ENCODE measurements at regions of chr16 and their contacts with region 1.

Region 1: GRCh38 chr16:58684354-58685083 is at the start of gene SLC38A7:
- DNase-seq: peak; percentile 85
- ATAC-seq: peak; percentile 97
- H3K4me3 Mint-ChIP-seq: peak within 1 kb of the TSS; percentile 84
- H3K27ac Mint-ChIP-seq: peak within 1 kb of the TSS; percentile 45
- H3K4me1 Mint-ChIP-seq: peaks cover 13% of the 10 kb centered on the region
- H3K27me3 Mint-ChIP-seq: peaks cover 2% of the 10 kb centered on the region
- total RNA-seq, gene SLC38A7: 10.4 to 12.3 TPM

Region 2: DNA sequence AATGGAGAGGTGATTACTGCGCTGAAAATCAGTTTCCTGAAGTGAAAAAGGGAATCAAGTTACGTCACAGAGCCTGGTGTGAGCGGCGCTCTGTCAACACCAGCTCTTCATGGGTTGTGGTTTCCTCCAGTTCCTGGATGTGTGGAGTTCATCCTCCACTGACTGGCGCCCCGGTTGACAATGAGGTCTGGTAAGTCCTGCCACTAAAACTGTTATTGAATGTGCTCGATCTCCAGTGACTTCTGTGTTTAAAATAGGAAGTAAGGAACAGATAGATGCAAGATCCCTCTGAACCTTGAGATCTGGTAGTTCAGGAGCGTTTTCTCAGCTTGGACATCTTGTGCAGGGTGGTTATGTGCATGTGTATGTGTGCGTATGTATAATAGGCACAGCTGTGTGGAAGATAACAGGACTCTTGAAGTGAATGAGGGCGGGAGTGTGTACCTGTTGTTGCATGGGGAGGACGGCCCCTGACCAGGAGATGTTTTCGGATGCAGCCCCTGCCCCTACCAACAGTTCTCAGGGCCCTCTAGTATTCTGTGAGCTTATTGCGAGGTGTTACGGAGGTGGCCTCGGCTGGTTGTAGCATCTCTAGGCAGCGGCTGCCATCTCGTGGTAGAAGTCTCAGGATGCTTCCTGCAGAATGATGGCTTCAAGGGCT is 71.6 kb after region 1 on chr16:
- CTCF ChIA-PET with region 1: interaction called, 16 read pairs
- DNase-seq: peak; percentile 87
- ATAC-seq: peak; percentile 97
- H3K4me3 Mint-ChIP-seq: peak overlapping the region; percentile 6
- H3K27ac Mint-ChIP-seq: no peak overlapping the region
- H3K4me1 Mint-ChIP-seq: peaks cover 10% of the 10 kb centered on the region
- H3K27me3 Mint-ChIP-seq: peaks cover 8% of the 10 kb centered on the region